SK-N-SH (cell line): ENCODE measurements at regions of chr15 and their contacts with region 1.

Region 1: DNA sequence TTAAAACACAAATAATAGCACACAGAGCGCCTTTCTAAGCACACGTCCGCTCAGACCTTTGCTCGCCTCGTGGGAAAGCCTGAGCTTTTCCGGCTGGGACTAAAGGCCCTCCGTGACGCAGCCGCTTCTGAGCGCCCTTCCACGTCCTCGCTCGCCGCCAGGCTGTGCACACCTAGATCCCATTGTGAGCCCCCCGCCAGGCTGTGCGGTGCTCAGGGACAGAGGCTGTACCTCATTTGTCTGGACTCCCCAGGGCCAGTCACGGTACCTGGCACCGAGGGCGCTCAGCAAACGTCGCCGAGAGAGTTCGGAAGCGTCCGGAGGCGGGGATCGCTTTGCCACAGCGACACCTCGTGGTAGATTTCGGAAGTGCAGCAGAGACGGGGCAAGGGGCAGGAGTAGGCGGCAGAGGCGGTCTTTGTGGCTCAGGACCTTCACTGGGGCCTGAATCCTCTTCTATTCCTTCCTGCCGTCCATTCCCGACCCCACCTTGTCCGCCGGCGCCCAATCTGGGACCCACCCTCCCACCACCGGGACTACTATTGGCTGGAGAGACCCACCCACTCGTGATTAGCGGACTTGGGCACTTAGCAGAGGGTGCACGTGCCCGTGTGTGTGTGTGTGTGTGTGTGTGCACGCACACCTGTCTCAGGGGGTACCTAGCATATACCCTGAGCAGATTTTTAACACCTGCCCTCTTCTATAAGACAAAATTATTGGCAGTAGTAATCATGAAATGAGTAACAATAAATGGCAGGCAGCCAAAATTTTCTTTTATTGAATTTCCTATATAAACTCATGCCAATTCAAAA is 65.6 kb downstream of the RHCG start:
- DNase-seq: peak; percentile 94
- H3K4me3 ChIP-seq: peak overlapping the region in 1 of 2 experiments; percentile 40; a peak in 1 of 4 replicates
- H3K27ac ChIP-seq: no peak overlapping the region
- H3K4me1 ChIP-seq: peaks cover 6 to 8% of the 10 kb centered on the region in 2 experiments; a peak in 3 of 4 replicates
- H3K27me3 ChIP-seq: no peaks in the 10 kb centered on the region
- CTCF ChIP-seq: peak; percentile 86
- EP300 ChIP-seq: no peak
- RAD21 ChIP-seq: peak; percentile 87

Region 2: DNA sequence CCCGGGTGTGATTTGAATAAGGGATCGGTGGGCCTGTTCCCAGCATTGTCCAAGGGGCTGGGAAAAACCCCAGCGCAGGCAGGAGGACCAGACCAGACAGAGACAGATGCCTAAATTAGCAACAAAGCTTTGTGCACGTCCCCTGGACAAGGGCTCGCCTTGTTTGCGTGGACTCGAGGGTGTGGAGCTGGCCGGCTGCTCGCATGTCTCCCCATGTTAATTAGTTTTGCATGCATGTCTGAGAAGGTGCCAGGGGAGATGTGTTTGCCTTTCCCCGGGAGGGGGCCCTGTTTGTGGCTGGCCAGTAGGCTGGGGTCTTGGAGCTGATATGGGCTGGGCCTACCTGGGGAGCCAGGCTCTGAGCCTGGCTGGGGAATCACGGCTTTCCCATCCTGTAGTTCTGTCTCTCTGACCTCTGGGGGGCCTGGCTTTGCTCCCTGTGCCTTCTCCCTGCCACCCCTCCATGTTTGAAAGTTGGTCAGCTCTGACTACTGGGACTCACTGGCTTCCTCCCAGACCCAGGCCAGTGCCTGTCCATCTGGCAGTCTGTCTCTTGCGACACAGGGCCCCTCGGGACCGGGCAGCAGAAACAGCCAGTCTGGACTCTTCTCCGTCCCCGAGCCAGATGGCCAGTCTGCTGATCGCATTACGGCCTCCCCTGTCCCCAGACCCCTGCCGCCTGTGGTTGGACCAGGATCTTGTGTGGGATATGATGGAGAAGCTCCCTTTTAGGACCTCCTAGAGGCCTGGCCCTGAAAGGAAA is 40.7 kb before region 1 on chr15:
- CTCF ChIA-PET with region 1: interaction called, 15 read pairs
- POLR2A ChIA-PET with region 1: no interaction called
- DNase-seq: peak; percentile 83
- H3K4me3 ChIP-seq: no peak overlapping the region
- H3K27ac ChIP-seq: peak overlapping the region in 1 of 2 experiments; percentile 98; a peak in 2 of 4 replicates
- H3K4me1 ChIP-seq: peaks cover 0 to 61% of the 10 kb centered on the region in 2 experiments; a peak in 2 of 4 replicates
- H3K27me3 ChIP-seq: no peaks in the 10 kb centered on the region
- CTCF ChIP-seq: no peak
- EP300 ChIP-seq: peak in 1 of 2 experiments; percentile 40; a peak in 2 of 4 replicates
- RAD21 ChIP-seq: no peak

Region 3: DNA sequence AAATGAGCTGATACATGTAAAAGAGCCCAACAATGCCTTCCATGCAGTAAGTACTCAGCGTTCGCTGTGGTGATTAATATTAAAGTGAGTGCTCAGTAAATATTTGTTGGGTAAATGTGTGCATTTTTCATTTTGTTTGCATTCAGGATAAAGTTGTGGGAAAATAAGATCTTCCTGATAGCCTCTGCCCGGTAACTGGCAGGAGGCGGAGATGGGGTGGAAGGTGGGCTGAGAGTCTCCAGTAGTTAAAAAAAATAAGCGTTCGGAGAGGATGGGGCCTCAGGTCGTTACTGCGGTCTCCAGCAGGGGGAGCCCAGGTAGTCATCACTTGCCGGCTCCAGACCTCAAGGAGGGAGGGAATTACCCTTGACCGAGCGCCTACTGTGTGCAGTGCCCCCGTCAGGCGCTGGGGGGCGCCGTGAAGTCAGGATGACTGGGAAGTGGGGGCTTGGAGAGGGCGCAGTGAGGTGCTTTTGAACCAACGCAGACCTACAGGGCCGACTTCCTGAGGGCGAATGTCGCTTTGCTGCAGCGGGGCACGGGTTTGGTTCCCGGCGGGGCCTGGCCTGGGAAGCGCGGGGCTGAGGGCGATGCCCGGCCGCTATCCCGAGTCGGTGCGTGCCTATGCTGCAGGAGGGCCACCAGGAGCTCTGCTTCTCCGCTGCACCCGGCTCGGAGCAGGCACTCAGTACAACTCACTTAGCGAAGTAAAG is 14.4 kb before region 1 on chr15:
- CTCF ChIA-PET with region 1: interaction called, 91 read pairs
- POLR2A ChIA-PET with region 1: interaction called, 3 read pairs
- DNase-seq: peak; percentile 96
- H3K4me3 ChIP-seq: peak overlapping the region in 1 of 2 experiments; percentile 60; a peak in 1 of 4 replicates
- H3K27ac ChIP-seq: no peak overlapping the region
- H3K4me1 ChIP-seq: no peaks in the 10 kb centered on the region; a peak in 1 of 4 replicates
- H3K27me3 ChIP-seq: no peaks in the 10 kb centered on the region
- CTCF ChIP-seq: peak; percentile 90
- EP300 ChIP-seq: no peak
- RAD21 ChIP-seq: peak; percentile 57

Region 4: GRCh38 chr15:89442671-89443307 is 12.1 kb after region 1 on chr15:
- CTCF ChIA-PET with region 1: interaction called, 51 read pairs
- POLR2A ChIA-PET with region 1: interaction called, 3 read pairs
- DNase-seq: peak; percentile 88
- H3K4me3 ChIP-seq: peak overlapping the region in 1 of 2 experiments; percentile 17; a peak in 1 of 4 replicates
- H3K27ac ChIP-seq: no peak overlapping the region
- H3K4me1 ChIP-seq: peaks cover 0 to 43% of the 10 kb centered on the region in 2 experiments; a peak in 1 of 4 replicates
- H3K27me3 ChIP-seq: no peaks in the 10 kb centered on the region
- CTCF ChIP-seq: peak; percentile 84
- EP300 ChIP-seq: no peak
- RAD21 ChIP-seq: peak; percentile 82

Region 5: DNA sequence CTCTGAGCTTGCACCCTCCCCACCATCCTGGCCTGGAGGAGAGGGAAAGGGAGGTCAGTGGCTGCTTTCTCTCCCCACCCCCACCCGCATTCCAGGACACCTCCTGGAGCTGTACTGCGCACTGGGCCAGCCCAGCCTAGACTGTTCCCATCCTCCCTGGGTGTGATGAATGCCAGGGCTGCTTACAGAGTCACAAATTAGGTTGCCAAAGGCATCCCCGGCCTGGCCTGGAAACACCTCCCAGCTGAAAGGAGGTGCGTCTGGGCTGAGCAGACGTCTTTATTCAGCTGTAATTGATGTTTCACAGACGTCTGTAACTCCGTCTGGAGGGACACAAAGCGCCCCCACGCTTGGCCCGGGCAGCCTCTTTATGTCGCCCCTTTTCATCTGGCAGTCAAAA is 18.1 kb after region 1 on chr15:
- CTCF ChIA-PET with region 1: interaction called, 51 read pairs
- POLR2A ChIA-PET with region 1: no interaction called
- DNase-seq: peak; percentile 90
- H3K4me3 ChIP-seq: no peak overlapping the region
- H3K27ac ChIP-seq: peak overlapping the region in 1 of 2 experiments; percentile 86; a peak in 2 of 4 replicates
- H3K4me1 ChIP-seq: peaks cover 9 to 72% of the 10 kb centered on the region in 2 experiments; a peak in 3 of 4 replicates
- H3K27me3 ChIP-seq: no peaks in the 10 kb centered on the region
- CTCF ChIP-seq: no peak
- EP300 ChIP-seq: peak in 1 of 2 experiments; percentile 89; a peak in 2 of 4 replicates
- RAD21 ChIP-seq: no peak

Region 6: GRCh38 chr15:89462331-89462912 is 31.7 kb after region 1 on chr15:
- CTCF ChIA-PET with region 1: interaction called, 11 read pairs
- POLR2A ChIA-PET with region 1: no interaction called
- DNase-seq: no peak
- H3K4me3 ChIP-seq: no peak overlapping the region
- H3K27ac ChIP-seq: no peak overlapping the region
- H3K4me1 ChIP-seq: peaks cover 0 to 6% of the 10 kb centered on the region in 2 experiments; a peak in 1 of 4 replicates
- H3K27me3 ChIP-seq: no peaks in the 10 kb centered on the region
- CTCF ChIP-seq: no peak
- EP300 ChIP-seq: no peak
- RAD21 ChIP-seq: no peak